ENCODE measurements at regions of chr18 and their contacts with region 1.

Region 1: GRCh38 chr18:25503567-25504081 is 151.7 kb upstream of the ZNF521 start:
- DNase-seq: peak; percentile 8 to 28
- H3K4me3 ChIP-seq: no peak overlapping the region; the same call in 1 of the 2 replicates
- H3K4me3 Mint-ChIP-seq: peak overlapping the region; percentile 59
- H3K27ac Mint-ChIP-seq: no peak overlapping the region
- H3K4me1 ChIP-seq: no peaks in the 10 kb centered on the region
- H3K4me1 Mint-ChIP-seq: no peaks in the 10 kb centered on the region
- H3K27me3 ChIP-seq: no peaks in the 10 kb centered on the region
- H3K27me3 Mint-ChIP-seq: peaks cover 5% of the 10 kb centered on the region
- CTCF ChIP-seq: no peak

Region 2: GRCh38 chr18:25351777-25352628 is 151.6 kb before region 1 on chr18 and contains the start of gene ZNF521:
- CTCF ChIA-PET with region 1: no interaction called
- POLR2A ChIA-PET with region 1: no interaction called
- intact Hi-C with region 1: loop called (anchors 10 kb)
- DNase-seq: peak; percentile 37 to 55
- H3K4me3 ChIP-seq: peak within 1 kb of the TSS; percentile 50
- H3K4me3 Mint-ChIP-seq: peak within 1 kb of the TSS; percentile 66
- H3K27ac Mint-ChIP-seq: no peak within 1 kb of the TSS
- H3K4me1 ChIP-seq: no peaks in the 10 kb centered on the region
- H3K4me1 Mint-ChIP-seq: no peaks in the 10 kb centered on the region
- H3K27me3 ChIP-seq: no peaks in the 10 kb centered on the region
- H3K27me3 Mint-ChIP-seq: peaks cover 4% of the 10 kb centered on the region
- CTCF ChIP-seq: no peak
- total RNA-seq, gene ZNF521: 0.09 TPM in 1 of 2 replicates, not detected in the other

Region 3: GRCh38 chr18:25561918-25562317 is 58.3 kb after region 1 on chr18:
- CTCF ChIA-PET with region 1: no interaction called
- POLR2A ChIA-PET with region 1: no interaction called
- intact Hi-C with region 1: no loop called
- DNase-seq: peak in 1 of 2 experiments; percentile 2
- H3K4me3 ChIP-seq: no peak overlapping the region
- H3K4me3 Mint-ChIP-seq: no peak overlapping the region
- H3K27ac Mint-ChIP-seq: no peak overlapping the region
- H3K4me1 ChIP-seq: no peaks in the 10 kb centered on the region
- H3K4me1 Mint-ChIP-seq: no peaks in the 10 kb centered on the region
- H3K27me3 ChIP-seq: no peaks in the 10 kb centered on the region
- H3K27me3 Mint-ChIP-seq: no peaks in the 10 kb centered on the region
- CTCF ChIP-seq: no peak

Measured in Caco-2 (cell line).